ENCODE measurements at regions of chr2 and their contacts with region 1.

Region 1: DNA sequence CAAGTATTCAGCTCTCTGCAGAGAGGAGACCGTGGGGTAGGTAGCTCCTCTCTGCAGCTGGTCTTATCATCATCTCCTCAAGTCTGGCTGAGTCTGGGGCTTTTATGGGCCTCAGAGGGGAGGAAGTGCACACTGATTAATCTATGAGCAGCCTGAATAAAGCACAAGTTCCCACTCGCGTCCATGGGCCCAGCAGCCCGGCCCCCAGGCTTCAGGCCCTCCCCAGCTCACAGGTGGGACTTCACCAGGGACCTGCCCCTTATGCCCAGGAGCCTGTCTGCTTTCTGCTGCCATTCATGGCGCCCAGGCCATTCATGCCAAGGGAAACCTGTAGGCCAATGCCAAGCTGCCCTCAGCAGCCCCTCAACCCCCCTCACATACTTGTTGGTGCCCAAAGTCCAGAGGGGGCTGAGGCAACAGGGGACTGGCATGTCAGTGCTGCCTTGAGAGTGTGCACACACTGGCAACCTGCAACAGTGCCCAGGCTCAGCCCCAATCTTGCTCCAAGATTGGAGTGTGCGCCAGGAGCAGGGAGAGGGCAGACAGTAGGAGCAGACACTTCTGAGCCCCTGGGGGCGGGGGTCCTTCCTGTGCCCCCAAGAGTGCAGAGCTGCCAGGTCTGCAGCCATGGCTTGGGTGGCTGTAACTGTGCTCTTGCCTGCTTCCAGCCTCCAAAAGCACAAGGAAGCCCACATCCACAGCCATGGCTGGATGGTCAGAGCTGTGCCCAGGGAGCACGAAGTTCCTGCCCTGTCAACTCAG is 375.6 kb upstream of the VWC2L start:
- DNase-seq: no peak
- ATAC-seq: no peak
- H3K4me3 Mint-ChIP-seq: no peak overlapping the region
- H3K27ac Mint-ChIP-seq: no peak overlapping the region
- H3K4me1 Mint-ChIP-seq: no peaks in the 10 kb centered on the region
- H3K27me3 Mint-ChIP-seq: no peaks in the 10 kb centered on the region

Region 2: DNA sequence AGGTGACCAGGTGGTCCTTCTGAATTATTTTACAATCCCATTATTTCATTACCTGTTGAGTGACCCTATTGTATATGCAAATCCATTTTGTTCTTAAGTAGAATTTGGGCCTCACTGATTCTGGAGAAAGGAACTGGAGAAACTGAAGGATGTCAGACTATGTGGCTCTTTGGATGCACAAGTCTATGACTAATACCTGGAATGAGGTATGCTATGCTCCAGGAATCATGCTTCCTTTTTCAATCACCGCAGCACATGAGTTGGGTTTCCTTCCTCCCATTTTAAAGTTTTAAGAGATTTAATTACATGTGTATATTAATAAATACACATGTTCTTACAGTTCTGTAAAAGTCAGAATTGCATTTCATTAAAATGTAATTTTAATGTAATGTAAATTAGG is 121.7 kb after region 1 on chr2:
- CTCF ChIA-PET with region 1: no interaction called
- POLR2A ChIA-PET with region 1: no interaction called
- intact Hi-C with region 1: loop called in 1 of 2 experiments (anchors 5 kb)
- DNase-seq: no peak
- ATAC-seq: no peak
- H3K4me3 Mint-ChIP-seq: no peak overlapping the region
- H3K27ac Mint-ChIP-seq: no peak overlapping the region
- H3K4me1 Mint-ChIP-seq: no peaks in the 10 kb centered on the region
- H3K27me3 Mint-ChIP-seq: no peaks in the 10 kb centered on the region